ENCODE measurements at regions of chr2 and their contacts with region 1.

Region 1: GRCh38 chr2:157497638-157498314 is 53.9 kb upstream of the CYTIP start:
- DNase-seq: no peak
- ATAC-seq: peak; percentile 78
- H3K4me3 Mint-ChIP-seq: no peak overlapping the region
- H3K27ac Mint-ChIP-seq: no peak overlapping the region
- H3K4me1 Mint-ChIP-seq: peaks cover 38% of the 10 kb centered on the region
- H3K27me3 Mint-ChIP-seq: no peaks in the 10 kb centered on the region
- CTCF ChIP-seq: peak; percentile 46

Region 2: GRCh38 chr2:157509744-157510143 is 12.0 kb after region 1 on chr2:
- CTCF ChIA-PET with region 1: interaction called, 12 read pairs
- POLR2A ChIA-PET with region 1: interaction called, 3 read pairs
- intact Hi-C with region 1: loop called (anchors 1 kb)
- DNase-seq: no peak
- ATAC-seq: no peak
- H3K4me3 Mint-ChIP-seq: no peak overlapping the region
- H3K27ac Mint-ChIP-seq: no peak overlapping the region
- H3K4me1 Mint-ChIP-seq: peaks cover 6% of the 10 kb centered on the region
- H3K27me3 Mint-ChIP-seq: peaks cover 10% of the 10 kb centered on the region
- CTCF ChIP-seq: no peak

Region 3: GRCh38 chr2:157596992-157597681 is 99.4 kb after region 1 on chr2:
- CTCF ChIA-PET with region 1: interaction called, 20 read pairs
- POLR2A ChIA-PET with region 1: no interaction called
- intact Hi-C with region 1: loop called (anchors 1 kb)
- DNase-seq: peak; percentile 42
- ATAC-seq: peak; percentile 80
- H3K4me3 Mint-ChIP-seq: peak overlapping the region; percentile 41
- H3K27ac Mint-ChIP-seq: no peak overlapping the region
- H3K4me1 Mint-ChIP-seq: peaks cover 8% of the 10 kb centered on the region
- H3K27me3 Mint-ChIP-seq: peaks cover 3% of the 10 kb centered on the region
- CTCF ChIP-seq: no peak

Region 4: GRCh38 chr2:157628477-157629415 is 131.0 kb after region 1 on chr2 and contains the start of gene ACVR1C:
- CTCF ChIA-PET with region 1: interaction called, 4 read pairs
- POLR2A ChIA-PET with region 1: no interaction called
- intact Hi-C with region 1: loop called (anchors 1 kb)
- DNase-seq: peak; percentile 55
- ATAC-seq: peak; percentile 87
- H3K4me3 Mint-ChIP-seq: peak within 1 kb of the TSS; percentile 82
- H3K27ac Mint-ChIP-seq: peak within 1 kb of the TSS; percentile 12
- H3K4me1 Mint-ChIP-seq: peaks cover 22% of the 10 kb centered on the region
- H3K27me3 Mint-ChIP-seq: peaks cover 12% of the 10 kb centered on the region
- CTCF ChIP-seq: no peak
- total RNA-seq, gene ACVR1C: 0.20 and 0.32 TPM in 2 replicates

Region 5: GRCh38 chr2:157777427-157777826 is 279.7 kb after region 1 on chr2:
- CTCF ChIA-PET with region 1: no interaction called
- POLR2A ChIA-PET with region 1: no interaction called
- intact Hi-C with region 1: loop called (anchors 1 kb)
- DNase-seq: no peak
- ATAC-seq: no peak
- H3K4me3 Mint-ChIP-seq: no peak overlapping the region
- H3K27ac Mint-ChIP-seq: no peak overlapping the region
- H3K4me1 Mint-ChIP-seq: no peaks in the 10 kb centered on the region
- H3K27me3 Mint-ChIP-seq: no peaks in the 10 kb centered on the region
- CTCF ChIP-seq: no peak

Region 6: GRCh38 chr2:158006961-158007719 is 509.4 kb after region 1 on chr2:
- CTCF ChIA-PET with region 1: interaction called, 4 read pairs
- POLR2A ChIA-PET with region 1: no interaction called
- intact Hi-C with region 1: loop called (anchors 1 kb)
- DNase-seq: no peak
- ATAC-seq: no peak
- H3K4me3 Mint-ChIP-seq: no peak overlapping the region
- H3K27ac Mint-ChIP-seq: no peak overlapping the region
- H3K4me1 Mint-ChIP-seq: peaks cover 5% of the 10 kb centered on the region
- H3K27me3 Mint-ChIP-seq: peaks cover 5% of the 10 kb centered on the region
- CTCF ChIP-seq: no peak

Region 7: GRCh38 chr2:158753641-158754611 is 1256.2 kb after region 1 on chr2:
- CTCF ChIA-PET with region 1: no interaction called
- POLR2A ChIA-PET with region 1: no interaction called
- intact Hi-C with region 1: loop called (anchors 2 kb)
- DNase-seq: no peak
- ATAC-seq: peak; percentile 74
- H3K4me3 Mint-ChIP-seq: no peak overlapping the region
- H3K27ac Mint-ChIP-seq: no peak overlapping the region
- H3K4me1 Mint-ChIP-seq: no peaks in the 10 kb centered on the region
- H3K27me3 Mint-ChIP-seq: peaks cover 10% of the 10 kb centered on the region
- CTCF ChIP-seq: no peak

Measured in activated B cell treated with CpG ODN at 0.5 μM for 24 hours (primary cell).